ENCODE measurements at regions of chr17 and their contacts with region 1.

Region 1: GRCh38 chr17:21511363-21512198 is 135.4 kb downstream of the KCNJ12 start:
- DNase-seq: peak; percentile 48 to 62 (median 55)
- H3K4me3 ChIP-seq: peak overlapping the region in 1 of 2 donors; percentile 48
- H3K4me3 Mint-ChIP-seq: peak overlapping the region; percentile 26 to 77 (median 73)
- H3K27ac ChIP-seq: peak overlapping the region; percentile 15
- H3K27ac Mint-ChIP-seq: peak overlapping the region in 2 of 7 donors; percentile 0 to 13
- H3K4me1 ChIP-seq: peaks cover 4% of the 10 kb centered on the region
- H3K4me1 Mint-ChIP-seq: peaks cover 5 to 11% (median 9%) of the 10 kb centered on the region in 4 donors
- H3K27me3 ChIP-seq: peaks cover 8% of the 10 kb centered on the region
- H3K27me3 Mint-ChIP-seq: peaks cover 17 to 21% of the 10 kb centered on the region in 2 donors

Region 2: DNA sequence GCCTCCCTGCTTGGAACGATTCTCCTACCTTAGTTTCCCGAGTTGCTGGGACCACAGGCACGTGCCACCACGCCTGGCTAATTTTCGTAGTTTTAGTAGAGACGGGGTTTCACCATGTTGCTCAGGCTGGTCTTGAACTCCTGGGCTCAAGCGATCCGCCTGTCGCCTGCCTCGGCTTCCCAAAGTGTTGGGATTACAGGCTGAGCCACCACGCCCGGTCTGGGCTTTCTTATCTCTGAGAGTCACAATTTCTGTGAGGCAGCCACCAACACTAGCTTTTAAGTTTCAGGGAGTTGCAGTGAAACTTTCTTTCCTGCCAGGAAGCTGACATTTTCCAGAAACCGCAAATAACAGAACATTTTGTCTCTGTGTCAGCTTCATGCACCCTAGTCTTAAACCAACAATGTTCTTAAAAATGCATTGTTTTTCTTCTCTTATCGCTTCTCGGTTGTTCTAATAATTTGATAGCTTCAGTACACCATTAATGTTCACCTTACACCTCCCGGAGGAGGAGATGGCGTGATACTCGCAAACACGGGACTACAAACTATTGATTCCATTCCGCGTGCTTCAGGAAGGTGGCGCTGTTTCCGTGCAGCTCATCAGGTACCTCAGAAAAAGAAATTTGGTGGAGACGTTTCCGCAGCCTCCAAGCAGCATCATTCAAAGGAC is 392.2 kb before region 1 on chr17:
- CTCF ChIA-PET with region 1: interaction called, 180 read pairs
- POLR2A ChIA-PET with region 1: interaction called, 3 read pairs
- intact Hi-C with region 1: loop called (anchors 1 kb)
- DNase-seq: peak; percentile 70 to 74 (median 71)
- H3K4me3 ChIP-seq: no peak overlapping the region
- H3K4me3 Mint-ChIP-seq: peak overlapping the region in 2 of 8 donors; percentile 2 to 59
- H3K27ac ChIP-seq: no peak overlapping the region
- H3K27ac Mint-ChIP-seq: peak overlapping the region in 2 of 7 donors; percentile 4 to 35
- H3K4me1 ChIP-seq: peaks cover 3% of the 10 kb centered on the region
- H3K4me1 Mint-ChIP-seq: peaks cover 6 to 14% (median 8%) of the 10 kb centered on the region in 4 donors
- H3K27me3 ChIP-seq: no peaks in the 10 kb centered on the region
- H3K27me3 Mint-ChIP-seq: peaks cover 1 to 2% of the 10 kb centered on the region in 2 donors

Region 3: GRCh38 chr17:21275579-21276263 is 235.9 kb before region 1 on chr17:
- CTCF ChIA-PET with region 1: interaction called, 87 read pairs
- POLR2A ChIA-PET with region 1: interaction called, 6 read pairs
- intact Hi-C with region 1: loop called (anchors 1 kb)
- DNase-seq: peak; percentile 85 to 93 (median 87)
- H3K4me3 ChIP-seq: peak overlapping the region; percentile 26 to 71
- H3K4me3 Mint-ChIP-seq: peak overlapping the region; percentile 86 to 99 (median 90)
- H3K27ac ChIP-seq: peak overlapping the region; percentile 77
- H3K27ac Mint-ChIP-seq: peak overlapping the region; percentile 78 to 95 (median 93)
- H3K4me1 ChIP-seq: peaks cover 49% of the 10 kb centered on the region
- H3K4me1 Mint-ChIP-seq: peaks cover 32 to 52% (median 39%) of the 10 kb centered on the region in 4 donors
- H3K27me3 ChIP-seq: no peaks in the 10 kb centered on the region
- H3K27me3 Mint-ChIP-seq: no peaks in the 10 kb centered on the region

Region 4: DNA sequence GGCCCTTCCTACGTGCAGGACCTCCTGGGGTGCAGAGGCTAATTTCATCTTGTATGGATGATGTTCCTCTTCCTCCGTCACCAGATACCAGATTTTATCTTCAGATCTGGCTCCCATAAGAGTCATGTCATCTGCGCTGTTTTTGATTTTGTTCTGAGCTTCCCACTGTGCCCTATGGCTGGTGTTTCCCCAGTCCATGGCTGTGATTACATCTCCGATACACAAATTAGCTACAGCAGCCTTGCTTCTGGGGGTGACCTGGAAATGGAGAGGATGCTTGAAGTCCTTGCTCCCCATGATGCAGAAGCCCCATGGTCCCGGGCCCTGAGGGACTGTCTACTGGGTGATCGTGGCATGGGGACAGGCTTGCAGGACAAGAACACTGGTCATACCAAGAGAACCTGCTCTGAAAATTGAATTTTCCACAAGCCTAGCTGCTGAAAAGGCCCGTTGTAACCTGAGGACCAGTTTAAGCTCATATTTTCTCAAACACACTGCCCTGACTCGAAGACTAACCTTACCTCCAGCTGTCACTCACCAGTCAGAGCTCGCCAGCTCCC is 66.4 kb before region 1 on chr17:
- CTCF ChIA-PET with region 1: no interaction called
- POLR2A ChIA-PET with region 1: no interaction called
- intact Hi-C with region 1: no loop called
- DNase-seq: no peak
- H3K4me3 ChIP-seq: no peak overlapping the region
- H3K4me3 Mint-ChIP-seq: no peak overlapping the region
- H3K27ac ChIP-seq: no peak overlapping the region
- H3K27ac Mint-ChIP-seq: no peak overlapping the region
- H3K4me1 ChIP-seq: no peaks in the 10 kb centered on the region
- H3K4me1 Mint-ChIP-seq: no peaks in the 10 kb centered on the region
- H3K27me3 ChIP-seq: no peaks in the 10 kb centered on the region
- H3K27me3 Mint-ChIP-seq: peaks cover 5 to 8% of the 10 kb centered on the region in 2 donors

Region 5: DNA sequence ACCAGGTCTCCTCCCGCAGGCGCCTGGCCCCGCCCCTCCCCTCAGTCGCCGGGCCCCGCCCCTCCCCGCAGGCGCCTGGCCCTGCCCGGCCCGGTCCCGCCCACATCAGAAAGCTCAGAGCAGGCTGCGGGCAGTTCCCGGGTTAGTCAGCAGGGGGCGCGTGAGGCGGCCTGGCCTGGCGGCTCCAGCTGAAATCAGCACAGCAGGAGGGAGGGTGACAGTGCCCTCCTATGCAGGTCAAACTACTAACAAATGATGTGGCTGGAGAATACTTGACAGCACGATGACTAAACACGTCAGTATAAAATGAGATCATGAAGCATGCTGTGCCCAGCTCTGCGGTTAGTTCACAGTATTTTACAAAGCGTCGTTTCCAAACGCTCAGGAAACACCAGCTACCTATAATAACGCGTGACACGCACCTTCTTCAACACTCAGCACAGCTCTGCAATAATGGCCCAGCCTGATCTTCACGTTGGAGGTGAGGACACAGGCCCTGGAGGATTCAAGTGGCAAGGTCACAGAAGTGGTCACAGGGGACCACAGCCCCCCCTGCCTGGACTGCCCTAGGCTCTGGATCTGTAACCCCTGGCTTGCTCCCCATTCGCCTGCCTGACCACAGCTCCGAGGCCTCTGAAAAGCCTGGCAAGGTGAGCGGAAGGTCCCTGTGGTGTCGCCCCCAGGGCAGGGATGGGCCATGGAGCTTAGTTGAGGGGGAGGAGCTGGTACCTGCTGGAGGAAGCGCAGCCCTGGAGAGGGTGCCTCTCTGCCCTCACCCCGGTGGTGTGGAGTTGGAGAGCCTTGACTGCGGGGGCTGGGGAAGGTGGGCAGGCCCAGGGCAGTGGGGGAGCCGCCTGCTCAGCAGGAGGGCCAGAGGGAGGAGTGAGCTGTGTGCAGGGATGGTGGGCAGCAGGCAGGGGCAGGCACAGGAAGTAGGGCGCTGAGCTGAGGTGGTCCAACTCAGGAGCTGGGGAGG is 54.2 kb before region 1 on chr17:
- CTCF ChIA-PET with region 1: interaction called, 52 read pairs
- POLR2A ChIA-PET with region 1: no interaction called
- intact Hi-C with region 1: loop called (anchors 1 kb)
- DNase-seq: peak; percentile 87 to 92 (median 88)
- H3K4me3 ChIP-seq: no peak overlapping the region
- H3K4me3 Mint-ChIP-seq: peak overlapping the region in 5 of 8 donors; percentile 23 to 61 (median 49)
- H3K27ac ChIP-seq: no peak overlapping the region
- H3K27ac Mint-ChIP-seq: peak overlapping the region in 6 of 7 donors; percentile 60 to 90 (median 82)
- H3K4me1 ChIP-seq: peaks cover 11% of the 10 kb centered on the region
- H3K4me1 Mint-ChIP-seq: peaks cover 13 to 22% (median 17%) of the 10 kb centered on the region in 4 donors
- H3K27me3 ChIP-seq: no peaks in the 10 kb centered on the region
- H3K27me3 Mint-ChIP-seq: peaks cover 8 to 13% of the 10 kb centered on the region in 2 donors

Region 6: GRCh38 chr17:21482189-21482865 is 29.3 kb before region 1 on chr17:
- CTCF ChIA-PET with region 1: no interaction called
- POLR2A ChIA-PET with region 1: no interaction called
- intact Hi-C with region 1: no loop called
- DNase-seq: no peak
- H3K4me3 ChIP-seq: no peak overlapping the region
- H3K4me3 Mint-ChIP-seq: no peak overlapping the region
- H3K27ac ChIP-seq: no peak overlapping the region
- H3K27ac Mint-ChIP-seq: no peak overlapping the region
- H3K4me1 ChIP-seq: no peaks in the 10 kb centered on the region
- H3K4me1 Mint-ChIP-seq: peaks cover 0 to 2% (median 0%) of the 10 kb centered on the region in 4 donors
- H3K27me3 ChIP-seq: no peaks in the 10 kb centered on the region
- H3K27me3 Mint-ChIP-seq: peaks cover 35 to 37% of the 10 kb centered on the region in 2 donors

Region 7: DNA sequence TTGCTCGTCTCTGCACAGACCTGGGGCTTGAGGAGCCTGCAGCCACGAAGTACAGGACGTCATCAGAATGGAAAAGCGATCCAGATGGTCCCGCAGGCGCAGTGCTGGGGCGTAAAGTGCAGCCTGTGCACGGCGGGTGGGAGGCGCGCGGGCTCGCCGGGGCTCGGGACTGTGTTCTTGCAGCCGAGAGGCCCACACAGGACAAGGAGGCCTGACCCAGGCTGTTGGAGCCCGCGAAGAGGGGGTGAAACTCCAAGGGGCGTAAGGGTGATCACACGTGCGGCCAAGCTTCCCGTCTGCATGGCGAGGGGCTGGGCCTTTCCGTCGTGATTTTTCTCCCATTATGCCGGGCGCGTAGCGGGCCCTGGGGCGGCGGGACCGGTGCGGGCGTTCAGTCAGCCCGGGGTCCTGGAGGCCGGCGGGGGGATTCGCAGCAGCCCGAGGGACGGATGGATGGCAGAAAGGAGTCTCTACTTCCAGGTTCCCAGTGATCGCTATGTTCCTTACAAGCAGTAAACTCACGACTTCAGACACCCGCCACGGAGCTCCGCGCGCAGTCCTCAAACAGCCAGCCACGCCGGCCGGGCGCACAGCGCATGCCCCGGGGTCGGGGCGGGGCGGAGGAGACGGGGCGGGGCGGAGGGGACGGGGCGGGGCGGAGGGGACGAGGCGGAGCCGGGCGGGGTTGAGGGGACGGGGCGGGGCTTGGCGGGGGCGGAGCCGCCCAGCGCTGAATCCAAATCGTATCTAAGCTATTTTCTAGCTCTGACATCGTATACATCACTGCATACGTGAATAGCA is 39.7 kb after region 1 on chr17:
- CTCF ChIA-PET with region 1: interaction called, 14 read pairs
- POLR2A ChIA-PET with region 1: no interaction called
- intact Hi-C with region 1: no loop called
- DNase-seq: peak; percentile 74 to 81 (median 76)
- H3K4me3 ChIP-seq: peak overlapping the region in 1 of 2 donors; percentile 73
- H3K4me3 Mint-ChIP-seq: peak overlapping the region; percentile 83 to 92 (median 88)
- H3K27ac ChIP-seq: peak overlapping the region; percentile 34
- H3K27ac Mint-ChIP-seq: peak overlapping the region in 5 of 7 donors; percentile 34 to 61 (median 50)
- H3K4me1 ChIP-seq: peaks cover 18% of the 10 kb centered on the region
- H3K4me1 Mint-ChIP-seq: peaks cover 11 to 33% (median 20%) of the 10 kb centered on the region in 4 donors
- H3K27me3 ChIP-seq: no peaks in the 10 kb centered on the region
- H3K27me3 Mint-ChIP-seq: peaks cover 13 to 17% of the 10 kb centered on the region in 2 donors

Measured in CD4-positive, alpha-beta memory T cell (primary cell).